ENCODE measurements at regions of chr14 and their contacts with region 1.

Region 1: DNA sequence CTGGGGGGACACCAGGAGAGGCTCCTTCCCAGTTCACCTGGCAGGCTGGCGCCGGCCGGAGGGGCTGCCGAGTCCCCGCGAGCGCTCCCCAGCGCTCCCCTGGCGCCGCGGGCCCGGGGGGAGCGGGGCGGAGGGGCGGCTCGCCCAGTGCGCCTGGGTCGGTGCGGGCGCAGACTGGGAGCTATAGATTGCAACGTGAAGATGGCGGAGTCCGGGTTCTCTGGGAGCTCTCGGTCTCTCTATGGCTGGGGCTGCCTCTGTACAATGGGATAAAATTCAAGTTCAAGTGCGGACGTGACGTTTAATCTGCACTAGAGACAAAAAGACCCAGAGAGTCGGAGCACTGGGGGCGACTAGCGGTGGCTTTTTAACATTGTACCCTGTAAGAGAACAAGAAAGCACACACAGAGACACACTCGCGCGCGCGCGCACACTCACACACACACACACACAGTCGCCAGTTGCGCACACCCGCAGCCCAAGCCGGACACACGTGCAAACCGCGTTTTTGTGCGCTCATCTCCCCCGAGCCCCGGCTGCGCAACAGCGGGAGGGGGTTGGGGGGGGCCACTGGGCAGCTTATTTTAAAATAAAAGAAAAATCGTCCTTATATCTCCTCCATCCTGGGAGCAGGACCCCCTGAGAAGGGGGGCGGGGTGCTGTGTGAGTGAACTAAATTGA is at the start of gene BCL11B:
- DNase-seq: peak; percentile 84
- ATAC-seq: peak; percentile 45
- H3K4me3 ChIP-seq: peak within 1 kb of the TSS; percentile 27 to 63 (median 49)
- H3K27ac ChIP-seq: no peak within 1 kb of the TSS
- H3K4me1 ChIP-seq: peaks cover 36% of the 10 kb centered on the region
- H3K27me3 ChIP-seq: peaks cover 6 to 40% of the 10 kb centered on the region in 2 experiments; a peak in 4 of 5 replicates
- CTCF ChIP-seq: peak; percentile 30; the same call in 1 of the 2 replicates
- EP300 ChIP-seq: no peak
- POLR2A ChIP-seq: no peak
- RAD21 ChIP-seq: 0 out of 2 replicates have a peak, but pooled peaks have one; percentile 14
- total RNA-seq, gene BCL11B: not detected in 2 replicates

Region 2: DNA sequence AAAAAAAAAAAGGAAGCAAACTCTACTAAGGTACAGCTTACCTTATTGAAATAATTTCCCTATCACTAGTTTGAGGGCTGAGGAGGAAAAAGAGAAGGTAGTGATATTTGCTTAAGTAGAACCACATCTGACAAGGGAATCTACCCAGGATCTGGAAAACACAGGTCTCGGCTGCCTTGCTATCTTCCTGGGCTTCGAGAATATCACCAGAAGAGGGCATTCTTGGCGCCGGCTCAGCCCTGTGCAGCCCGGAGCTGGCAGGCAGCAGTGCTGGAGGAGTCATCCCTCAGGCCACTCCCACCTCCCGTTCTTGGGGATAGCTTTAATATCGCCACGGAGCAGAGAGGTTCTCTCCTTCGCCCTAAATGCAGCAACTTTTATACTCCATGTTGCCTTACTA is 1293.8 kb before region 1 on chr14:
- CTCF ChIA-PET with region 1: no interaction called
- POLR2A ChIA-PET with region 1: no interaction called
- in situ Hi-C with region 1: loop called (anchors 25 kb)
- intact Hi-C with region 1: loop called (anchors 5 kb)
- DNase-seq: no peak
- ATAC-seq: peak; percentile 92
- H3K4me3 ChIP-seq: no peak overlapping the region
- H3K27ac ChIP-seq: no peak overlapping the region
- H3K4me1 ChIP-seq: no peaks in the 10 kb centered on the region
- H3K27me3 ChIP-seq: no peaks in the 10 kb centered on the region
- CTCF ChIP-seq: peak; percentile 49
- EP300 ChIP-seq: no peak
- POLR2A ChIP-seq: no peak
- RAD21 ChIP-seq: no peak

Region 3: DNA sequence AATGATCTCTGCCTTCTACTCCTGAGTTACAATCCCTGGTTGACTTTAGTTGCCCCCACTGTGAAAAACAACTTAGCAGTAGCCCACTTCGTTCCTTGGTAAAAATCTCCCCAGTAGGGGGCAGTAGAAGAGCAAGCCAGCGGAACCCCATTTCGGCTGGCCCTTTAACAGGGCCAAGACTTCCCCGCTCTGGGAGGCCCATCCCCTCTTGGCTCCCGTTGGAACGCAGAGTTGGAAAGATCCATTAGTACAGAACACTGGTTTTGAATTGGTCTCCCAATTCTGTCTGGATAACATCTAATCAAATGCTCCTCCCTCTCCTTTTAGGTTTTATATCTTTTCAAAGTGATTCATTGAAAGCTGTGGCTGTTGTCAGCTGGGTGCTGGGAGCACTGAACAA is 1133.4 kb before region 1 on chr14:
- CTCF ChIA-PET with region 1: no interaction called
- POLR2A ChIA-PET with region 1: no interaction called
- in situ Hi-C with region 1: loop called (anchors 25 kb)
- intact Hi-C with region 1: loop called (anchors 5 kb)
- DNase-seq: no peak
- ATAC-seq: no peak
- H3K4me3 ChIP-seq: no peak overlapping the region
- H3K27ac ChIP-seq: no peak overlapping the region
- H3K4me1 ChIP-seq: no peaks in the 10 kb centered on the region
- H3K27me3 ChIP-seq: no peaks in the 10 kb centered on the region
- CTCF ChIP-seq: peak; percentile 40
- EP300 ChIP-seq: no peak
- POLR2A ChIP-seq: no peak
- RAD21 ChIP-seq: no peak

Region 4: DNA sequence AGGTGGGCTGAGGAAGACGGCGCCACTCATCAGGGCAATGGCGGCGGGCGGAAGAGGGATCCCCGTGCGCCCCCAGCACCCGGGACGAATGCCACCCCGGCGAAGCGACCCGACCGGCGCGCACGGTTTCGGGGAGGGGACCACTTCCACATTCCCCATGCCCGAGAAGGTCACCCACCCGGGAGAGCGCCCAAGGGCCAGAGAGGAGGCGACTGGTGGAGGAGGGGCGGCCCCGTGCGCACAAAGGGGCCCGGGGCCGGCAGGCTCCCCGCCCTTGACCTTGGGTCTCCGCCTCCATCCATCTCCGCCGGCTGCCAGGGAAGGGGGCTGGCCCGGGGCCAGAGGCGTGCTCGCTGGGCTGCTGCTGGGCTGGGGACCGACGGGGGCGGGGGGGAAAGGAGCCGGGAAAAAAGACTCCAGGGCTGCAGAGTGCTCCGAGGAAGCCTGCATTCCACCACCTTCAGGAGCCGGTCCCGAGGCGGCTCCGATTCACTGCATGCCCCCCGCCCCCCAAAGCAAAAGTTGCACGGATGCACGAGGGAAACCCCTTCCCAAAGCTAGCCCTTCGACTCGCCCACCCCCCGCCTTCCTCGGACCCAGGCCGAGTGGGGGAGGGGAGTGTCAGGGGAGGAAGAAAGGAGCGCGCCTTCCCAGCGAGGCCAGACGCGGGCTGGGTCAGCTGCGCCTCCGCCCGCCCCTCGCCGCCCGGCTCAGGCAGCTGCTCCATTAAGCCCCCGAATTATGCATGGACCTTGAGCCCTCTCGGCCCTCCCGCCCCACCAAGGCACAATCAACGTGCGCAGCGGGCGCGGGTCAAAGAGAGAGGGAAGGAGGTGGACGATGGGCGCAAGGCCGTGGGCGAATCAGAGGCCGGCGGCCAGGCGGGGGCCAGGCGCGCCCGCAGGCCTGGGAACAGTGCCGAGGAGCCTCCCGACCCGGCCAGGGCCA is 26.3 kb before region 1 on chr14:
- CTCF ChIA-PET with region 1: no interaction called
- POLR2A ChIA-PET with region 1: no interaction called
- in situ Hi-C with region 1: no loop called
- intact Hi-C with region 1: no loop called
- DNase-seq: no peak
- ATAC-seq: peak; percentile 45; the same call in 2 of the 3 replicates
- H3K4me3 ChIP-seq: peak overlapping the region in 1 of 3 experiments; percentile 16; a peak in 1 of 6 replicates
- H3K27ac ChIP-seq: no peak overlapping the region
- H3K4me1 ChIP-seq: no peaks in the 10 kb centered on the region
- H3K27me3 ChIP-seq: peaks cover 4 to 71% of the 10 kb centered on the region in 2 experiments
- CTCF ChIP-seq: no peak
- EP300 ChIP-seq: no peak
- POLR2A ChIP-seq: no peak
- RAD21 ChIP-seq: no peak

Region 5: DNA sequence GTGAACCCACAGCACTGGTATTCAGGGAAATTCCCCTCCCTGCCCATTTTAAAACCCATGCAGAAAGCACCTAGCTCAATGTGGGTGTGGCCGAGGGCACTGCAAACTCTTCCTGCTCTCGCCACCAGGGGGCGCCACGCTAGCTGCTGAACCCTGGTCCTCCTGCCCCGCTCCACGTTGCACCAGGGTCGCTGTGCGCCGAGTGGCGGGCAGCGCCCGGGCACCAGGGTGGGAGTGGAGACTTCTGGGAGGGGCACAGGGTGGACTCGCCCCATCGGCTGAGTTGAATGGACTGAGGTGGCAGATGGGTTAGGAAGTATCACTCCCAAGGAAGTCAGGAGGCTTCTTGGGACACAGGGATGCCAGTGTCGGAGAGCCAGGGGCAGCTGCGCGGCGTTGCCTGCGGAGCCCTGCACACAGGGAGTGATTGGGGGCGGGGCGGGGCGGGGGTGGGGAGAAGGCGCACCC is 48.0 kb after region 1 on chr14:
- CTCF ChIA-PET with region 1: no interaction called
- POLR2A ChIA-PET with region 1: interaction called, 3 read pairs
- in situ Hi-C with region 1: no loop called
- intact Hi-C with region 1: loop called (anchors 5 kb)
- DNase-seq: peak; percentile 29
- ATAC-seq: peak; percentile 12; the same call in 2 of the 3 replicates
- H3K4me3 ChIP-seq: no peak overlapping the region
- H3K27ac ChIP-seq: no peak overlapping the region
- H3K4me1 ChIP-seq: peaks cover 80% of the 10 kb centered on the region
- H3K27me3 ChIP-seq: no peaks in the 10 kb centered on the region
- CTCF ChIP-seq: peak; percentile 80
- EP300 ChIP-seq: no peak
- POLR2A ChIP-seq: no peak
- RAD21 ChIP-seq: peak; percentile 36; the same call in 1 of the 2 replicates

Region 6: GRCh38 chr14:99415496-99416281 is 143.6 kb after region 1 on chr14:
- CTCF ChIA-PET with region 1: no interaction called
- POLR2A ChIA-PET with region 1: no interaction called
- in situ Hi-C with region 1: no loop called
- intact Hi-C with region 1: loop called (anchors 2 kb)
- DNase-seq: peak; percentile 82
- ATAC-seq: peak; percentile 90
- H3K4me3 ChIP-seq: no peak overlapping the region
- H3K27ac ChIP-seq: no peak overlapping the region
- H3K4me1 ChIP-seq: peaks cover 4% of the 10 kb centered on the region; the same call in 1 of the 2 replicates
- H3K27me3 ChIP-seq: no peaks in the 10 kb centered on the region
- CTCF ChIP-seq: peak; percentile 84
- EP300 ChIP-seq: no peak
- POLR2A ChIP-seq: no peak
- RAD21 ChIP-seq: peak; percentile 77